Right lobe of liver (tissue), 6 donors: ENCODE measurements at regions of chr3 and their contacts with region 1.

Region 1: GRCh38 chr3:49839193-49839809 is 17.1 kb downstream of the TRAIP start:
- DNase-seq: peak; percentile 75 to 86 (median 78)
- ATAC-seq: peak; percentile 90 to 96 (median 94)
- H3K4me3 ChIP-seq: peak overlapping the region in 1 of 3 donors; percentile 9
- H3K27ac ChIP-seq: no peak overlapping the region
- H3K4me1 ChIP-seq: peaks cover 0 to 4% (median 0%) of the 10 kb centered on the region in 4 donors
- H3K27me3 ChIP-seq: no peaks in the 10 kb centered on the region
- CTCF ChIP-seq: peak; percentile 85 to 94 (median 91)
- POLR2A ChIP-seq: no peak

Region 2: DNA sequence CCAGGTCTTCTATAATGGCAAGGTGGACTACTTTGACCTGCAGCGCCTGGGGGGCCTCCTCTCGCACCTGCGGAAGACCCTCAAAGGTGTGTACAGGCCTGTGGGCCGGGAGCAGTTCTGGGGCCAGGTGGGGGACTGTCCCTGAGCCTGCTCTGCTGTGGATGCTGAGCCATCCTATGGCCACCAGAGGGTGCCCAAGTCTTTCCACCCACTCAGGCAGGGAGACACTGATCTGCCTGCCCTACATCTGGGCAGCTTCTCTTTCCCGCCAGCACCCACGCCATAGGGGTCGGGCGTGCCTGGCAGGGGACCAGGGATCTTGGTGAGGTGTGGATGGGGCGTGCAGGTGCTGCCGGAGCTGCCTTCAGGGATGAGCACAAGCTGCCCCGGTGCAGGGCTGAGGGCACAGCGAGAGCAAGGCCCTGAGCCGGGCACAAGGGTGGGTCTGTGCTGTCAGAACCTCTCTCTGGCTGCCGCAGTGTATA is 135.8 kb before region 1 on chr3:
- intact Hi-C with region 1: loop called in 1 of 2 experiments (anchors 10 kb)
- DNase-seq: peak in 1 of 3 donors; percentile 52
- ATAC-seq: peak; percentile 78 to 86 (median 84)
- H3K4me3 ChIP-seq: no peak overlapping the region
- H3K27ac ChIP-seq: no peak overlapping the region
- H3K4me1 ChIP-seq: no peaks in the 10 kb centered on the region
- H3K27me3 ChIP-seq: no peaks in the 10 kb centered on the region
- CTCF ChIP-seq: peak; percentile 69 to 91 (median 82)
- POLR2A ChIP-seq: no peak

Region 3: DNA sequence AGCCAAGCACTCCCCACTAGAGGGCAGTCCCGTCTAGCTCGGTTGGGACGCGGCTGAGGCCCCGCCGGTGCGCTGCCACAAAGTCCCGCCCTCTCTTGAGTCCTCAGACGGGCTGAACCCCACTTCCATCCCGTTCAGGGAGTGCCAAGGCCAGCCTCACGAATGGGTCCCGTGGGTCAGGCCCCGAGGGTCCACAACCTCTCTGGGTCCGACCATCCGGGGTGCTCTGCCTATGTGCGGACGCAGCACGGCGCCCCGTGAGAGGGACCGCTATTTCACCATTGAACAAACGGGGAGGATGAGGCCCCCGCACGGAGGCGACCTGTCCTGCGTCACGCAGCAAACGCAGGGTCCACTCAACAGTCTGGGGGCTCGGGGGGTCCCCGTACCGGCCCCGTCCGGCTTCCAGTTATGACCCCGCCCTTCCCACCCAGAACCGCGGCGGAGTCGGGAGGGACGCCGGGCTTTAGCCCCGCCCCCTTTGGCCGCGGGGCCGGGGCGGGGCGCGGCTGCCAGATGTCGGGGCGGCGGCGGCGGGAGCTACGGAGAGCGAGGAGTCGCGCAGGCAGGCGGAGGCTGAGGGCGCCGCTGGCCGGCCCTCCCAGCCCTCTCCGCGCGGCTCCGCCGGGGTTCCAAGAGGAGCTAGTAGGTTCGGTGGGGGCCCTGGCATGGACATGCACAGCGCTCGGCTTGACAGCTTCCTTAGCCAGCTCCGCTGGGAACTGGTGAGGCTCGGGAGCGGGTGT is 36.4 kb before region 1 on chr3 and contains the start of gene INKA1:
- intact Hi-C with region 1: loop called (anchors 5 kb)
- DNase-seq: peak; percentile 92 to 93 (median 93)
- ATAC-seq: peak; percentile 87 to 91 (median 89)
- H3K4me3 ChIP-seq: peak within 1 kb of the TSS; percentile 67 to 97 (median 69)
- H3K27ac ChIP-seq: peak within 1 kb of the TSS; percentile 42 to 69 (median 63)
- H3K4me1 ChIP-seq: peaks cover 0 to 6% (median 0%) of the 10 kb centered on the region in 4 donors
- H3K27me3 ChIP-seq: no peaks in the 10 kb centered on the region
- CTCF ChIP-seq: peak; percentile 87 to 92 (median 90)
- POLR2A ChIP-seq: peak; percentile 46
- total RNA-seq, gene INKA1: 0.46 to 1.2 (median 0.73) TPM

Region 4: GRCh38 chr3:49906004-49906743 is 66.9 kb after region 1 on chr3:
- intact Hi-C with region 1: loop called in 1 of 2 experiments (anchors 10 kb)
- DNase-seq: peak in 1 of 3 donors; percentile 58
- ATAC-seq: peak; percentile 56 to 74 (median 58)
- H3K4me3 ChIP-seq: peak overlapping the region in 1 of 3 donors; percentile 21
- H3K27ac ChIP-seq: no peak overlapping the region
- H3K4me1 ChIP-seq: peaks cover 0 to 4% (median 0%) of the 10 kb centered on the region in 4 donors
- H3K27me3 ChIP-seq: no peaks in the 10 kb centered on the region
- CTCF ChIP-seq: peak; percentile 52 to 69 (median 58)
- POLR2A ChIP-seq: no peak

Region 5: GRCh38 chr3:49939858-49940666 is 100.8 kb after region 1 on chr3 and contains the start of gene RBM6:
- intact Hi-C with region 1: no loop called
- DNase-seq: peak; percentile 99
- ATAC-seq: peak; percentile 97 to 99 (median 98)
- H3K4me3 ChIP-seq: peak within 1 kb of the TSS; percentile 70 to 91 (median 75)
- H3K27ac ChIP-seq: peak within 1 kb of the TSS; percentile 58 to 79 (median 73)
- H3K4me1 ChIP-seq: peaks cover 0 to 22% (median 2%) of the 10 kb centered on the region in 4 donors
- H3K27me3 ChIP-seq: no peaks in the 10 kb centered on the region
- CTCF ChIP-seq: no peak
- POLR2A ChIP-seq: peak; percentile 88
- total RNA-seq, gene RBM6: 25.9 to 46.4 (median 32.9) TPM